ENCODE measurements at regions of chr4 and their contacts with region 1.

Region 1: GRCh38 chr4:112951362-112952312 is 97.8 kb upstream of the ANK2 start:
- DNase-seq: no peak
- ATAC-seq: no peak
- H3K4me3 ChIP-seq: no peak overlapping the region
- H3K27ac ChIP-seq: no peak overlapping the region
- H3K4me1 ChIP-seq: no peaks in the 10 kb centered on the region
- H3K27me3 ChIP-seq: no peaks in the 10 kb centered on the region
- CTCF ChIP-seq: peak; percentile 35 to 45 (median 39); a peak in 4 of 6 replicates
- EP300 ChIP-seq: no peak
- POLR2A ChIP-seq: no peak
- RAD21 ChIP-seq: no peak

Region 2: GRCh38 chr4:112860830-112861690 is 90.6 kb before region 1 on chr4:
- CTCF ChIA-PET with region 1: interaction called, 4 read pairs
- POLR2A ChIA-PET with region 1: no interaction called
- RAD21 ChIA-PET with region 1: no interaction called
- SMC1A ChIA-PET with region 1: interaction called, 11 read pairs
- in situ Hi-C with region 1: no loop called
- intact Hi-C with region 1: no loop called
- DNase-seq: peak; percentile 7
- ATAC-seq: peak; percentile 73
- H3K4me3 ChIP-seq: no peak overlapping the region
- H3K27ac ChIP-seq: no peak overlapping the region
- H3K4me1 ChIP-seq: no peaks in the 10 kb centered on the region
- H3K27me3 ChIP-seq: no peaks in the 10 kb centered on the region
- CTCF ChIP-seq: no peak
- EP300 ChIP-seq: no peak
- POLR2A ChIP-seq: no peak
- RAD21 ChIP-seq: no peak

Region 3: GRCh38 chr4:112927544-112927943 is 24.1 kb before region 1 on chr4:
- CTCF ChIA-PET with region 1: interaction called, 16 read pairs
- POLR2A ChIA-PET with region 1: no interaction called
- RAD21 ChIA-PET with region 1: interaction called, 3 read pairs
- SMC1A ChIA-PET with region 1: no interaction called
- in situ Hi-C with region 1: no loop called
- intact Hi-C with region 1: no loop called
- DNase-seq: no peak
- ATAC-seq: no peak
- H3K4me3 ChIP-seq: no peak overlapping the region
- H3K27ac ChIP-seq: no peak overlapping the region
- H3K4me1 ChIP-seq: no peaks in the 10 kb centered on the region
- H3K27me3 ChIP-seq: no peaks in the 10 kb centered on the region
- CTCF ChIP-seq: no peak
- EP300 ChIP-seq: no peak
- POLR2A ChIP-seq: no peak
- RAD21 ChIP-seq: no peak

Region 4: DNA sequence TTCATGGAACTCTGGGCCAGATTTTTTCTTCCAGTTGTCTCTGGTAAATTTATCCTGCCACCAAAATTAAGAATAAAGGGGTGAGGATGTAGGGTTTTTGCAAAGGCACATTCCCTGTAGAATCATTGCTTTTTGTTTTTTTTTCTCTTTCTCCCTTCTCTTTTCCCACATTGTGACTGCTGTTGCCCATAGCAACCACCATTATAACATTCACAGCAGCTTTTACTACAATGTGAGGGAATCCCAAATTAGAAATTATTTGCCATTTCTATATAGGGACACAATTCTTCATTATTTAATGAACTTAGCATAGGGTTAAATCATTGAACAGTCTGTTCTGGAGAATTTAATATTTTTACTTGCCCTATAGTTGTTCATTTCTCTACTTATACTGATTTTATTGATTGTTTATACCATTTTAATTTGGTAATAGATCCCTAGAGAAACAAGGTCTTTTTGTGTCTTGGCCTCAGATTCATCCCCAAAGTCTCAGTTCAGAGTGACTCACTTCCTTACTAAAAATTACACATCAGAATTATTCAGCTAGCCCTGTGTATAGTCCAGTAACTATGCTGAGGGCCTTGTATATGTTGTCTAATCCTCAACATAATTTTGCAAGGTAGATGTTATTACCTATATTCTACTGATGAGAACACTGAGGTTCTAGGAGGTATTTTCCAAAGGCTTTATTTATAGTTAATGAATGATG is 17.0 kb after region 1 on chr4:
- CTCF ChIA-PET with region 1: interaction called, 42 read pairs
- POLR2A ChIA-PET with region 1: no interaction called
- RAD21 ChIA-PET with region 1: interaction called, 3 read pairs
- SMC1A ChIA-PET with region 1: no interaction called
- in situ Hi-C with region 1: no loop called
- intact Hi-C with region 1: no loop called
- DNase-seq: no peak
- ATAC-seq: peak; percentile 45
- H3K4me3 ChIP-seq: no peak overlapping the region
- H3K27ac ChIP-seq: no peak overlapping the region
- H3K4me1 ChIP-seq: no peaks in the 10 kb centered on the region
- H3K27me3 ChIP-seq: no peaks in the 10 kb centered on the region
- CTCF ChIP-seq: no peak
- EP300 ChIP-seq: no peak
- POLR2A ChIP-seq: no peak
- RAD21 ChIP-seq: no peak

Region 5: DNA sequence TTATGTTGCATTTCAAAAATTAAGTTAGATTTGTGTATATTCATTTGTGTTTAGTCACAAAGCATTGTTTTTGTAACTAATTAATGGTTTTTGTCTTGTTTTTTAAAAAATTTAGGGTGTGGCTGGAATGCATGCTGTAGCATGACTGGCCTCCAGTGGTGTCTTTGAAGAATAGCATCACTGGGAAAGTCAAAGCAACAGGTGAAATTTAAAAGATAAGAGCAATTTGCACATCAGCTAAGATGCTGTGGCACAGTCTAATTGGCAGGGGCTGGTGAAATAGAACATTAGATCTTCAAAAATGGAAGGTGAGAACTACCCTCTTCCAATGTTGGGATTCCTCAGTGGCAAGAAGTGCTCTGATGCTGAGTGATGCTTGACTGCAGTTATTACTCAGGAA is 143.2 kb after region 1 on chr4:
- CTCF ChIA-PET with region 1: interaction called, 25 read pairs
- POLR2A ChIA-PET with region 1: no interaction called
- RAD21 ChIA-PET with region 1: interaction called, 5 read pairs
- SMC1A ChIA-PET with region 1: interaction called, 6 read pairs
- in situ Hi-C with region 1: no loop called
- intact Hi-C with region 1: loop called (anchors 1 kb)
- DNase-seq: no peak
- ATAC-seq: peak; percentile 53; the same call in 2 of the 3 replicates
- H3K4me3 ChIP-seq: no peak overlapping the region
- H3K27ac ChIP-seq: no peak overlapping the region
- H3K4me1 ChIP-seq: no peaks in the 10 kb centered on the region
- H3K27me3 ChIP-seq: no peaks in the 10 kb centered on the region
- CTCF ChIP-seq: peak; percentile 62 to 68 (median 64); a peak in 5 of 6 replicates
- EP300 ChIP-seq: no peak
- POLR2A ChIP-seq: no peak
- RAD21 ChIP-seq: peak; percentile 76